T-cell (primary cell): ENCODE measurements at regions of chr17 and their contacts with region 1.

Region 1: DNA sequence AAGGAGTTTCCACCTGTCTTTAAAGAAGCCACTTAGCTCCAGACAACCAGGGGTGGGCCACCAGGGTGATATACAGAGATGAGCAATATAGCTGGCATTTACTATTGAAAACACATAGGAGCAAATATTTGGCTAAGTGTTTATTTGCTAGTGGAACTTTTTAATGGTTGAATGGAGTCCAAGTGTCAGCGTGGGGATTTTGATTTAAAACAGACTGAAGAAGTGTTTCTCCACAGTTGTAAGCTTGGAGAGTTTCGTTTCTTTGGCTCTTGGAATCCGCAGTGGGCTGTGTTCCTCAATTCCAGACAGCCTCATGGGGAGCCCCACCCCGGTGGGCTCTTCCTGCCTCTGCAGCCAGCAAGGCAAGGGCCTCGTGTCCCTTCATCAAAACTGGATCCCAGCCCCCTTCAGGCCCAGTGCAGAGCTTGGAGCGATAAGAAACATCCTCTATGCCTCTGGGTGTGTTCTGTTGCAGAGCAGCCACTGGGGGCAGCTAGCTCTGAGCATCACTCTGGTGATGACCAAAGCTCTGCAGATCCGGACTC is 36.1 kb downstream of the NOG start:
- DNase-seq: peak in 19 of 35 experiments; percentile 2 to 39 (median 7)
- ATAC-seq: peak; percentile 75 to 88 (median 84)
- H3K4me3 ChIP-seq: no peak overlapping the region
- H3K4me3 Mint-ChIP-seq: no peak overlapping the region
- H3K27ac ChIP-seq: no peak overlapping the region
- H3K27ac Mint-ChIP-seq: no peak overlapping the region
- H3K4me1 ChIP-seq: no peaks in the 10 kb centered on the region
- H3K4me1 Mint-ChIP-seq: peaks cover 0 to 6% (median 6%) of the 10 kb centered on the region in 3 donors
- H3K27me3 ChIP-seq: peaks cover 0 to 4% of the 10 kb centered on the region in 2 experiments
- H3K27me3 Mint-ChIP-seq: peaks cover 0 to 5% of the 10 kb centered on the region in 2 donors

Region 2: GRCh38 chr17:56577843-56578204 is 51.8 kb before region 1 on chr17:
- CTCF ChIA-PET with region 1: no interaction called
- POLR2A ChIA-PET with region 1: no interaction called
- DNase-seq: no peak
- ATAC-seq: no peak
- H3K4me3 ChIP-seq: no peak overlapping the region
- H3K4me3 Mint-ChIP-seq: no peak overlapping the region
- H3K27ac ChIP-seq: no peak overlapping the region
- H3K27ac Mint-ChIP-seq: no peak overlapping the region
- H3K4me1 ChIP-seq: no peaks in the 10 kb centered on the region
- H3K4me1 Mint-ChIP-seq: no peaks in the 10 kb centered on the region
- H3K27me3 ChIP-seq: peaks cover 0 to 20% of the 10 kb centered on the region in 2 experiments
- H3K27me3 Mint-ChIP-seq: peaks cover 19 to 23% of the 10 kb centered on the region in 2 donors

Region 3: DNA sequence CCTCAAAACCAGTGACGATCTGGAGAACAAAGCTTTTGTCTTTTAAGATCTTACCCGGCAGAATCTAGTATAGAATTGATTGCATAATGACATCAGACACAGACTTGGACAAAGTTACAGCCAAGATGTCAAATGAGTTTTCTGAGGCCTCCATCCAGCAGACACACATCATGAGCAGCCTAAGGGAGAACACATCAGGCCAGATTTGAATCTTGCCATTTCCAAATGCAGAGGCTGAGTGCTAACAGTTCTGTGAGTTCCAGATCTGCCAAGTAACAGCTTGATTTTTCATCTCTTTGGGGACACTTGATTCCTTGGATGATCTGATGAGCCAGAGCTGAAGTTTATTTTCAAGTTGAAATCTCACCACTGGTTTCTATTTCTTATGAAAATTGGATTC is 15.1 kb before region 1 on chr17:
- CTCF ChIA-PET with region 1: interaction called in 1 of 2 experiments, 6 read pairs
- POLR2A ChIA-PET with region 1: interaction called in 1 of 2 experiments, 10 read pairs
- DNase-seq: no peak
- ATAC-seq: no peak
- H3K4me3 ChIP-seq: no peak overlapping the region
- H3K4me3 Mint-ChIP-seq: no peak overlapping the region
- H3K27ac ChIP-seq: no peak overlapping the region
- H3K27ac Mint-ChIP-seq: no peak overlapping the region
- H3K4me1 ChIP-seq: no peaks in the 10 kb centered on the region
- H3K4me1 Mint-ChIP-seq: peaks cover 3 to 25% (median 3%) of the 10 kb centered on the region in 3 donors
- H3K27me3 ChIP-seq: peaks cover 0 to under 1% of the 10 kb centered on the region in 2 experiments
- H3K27me3 Mint-ChIP-seq: peaks cover 0 to 2% of the 10 kb centered on the region in 2 donors